Common myeloid progenitor, CD34-positive (primary cell): ENCODE measurements at regions of chr12 and their contacts with region 1.

Region 1: GRCh38 chr12:12376646-12377448 is 20.0 kb downstream of the BORCS5 start:
- DNase-seq: peak; percentile 78 to 88 (median 87)
- H3K4me3 ChIP-seq: no peak overlapping the region
- H3K27ac ChIP-seq: no peak overlapping the region
- H3K4me1 ChIP-seq: peaks cover 0 to 4% (median 2%) of the 10 kb centered on the region in 4 experiments
- H3K27me3 ChIP-seq: no peaks in the 10 kb centered on the region

Region 2: GRCh38 chr12:12282761-12283425 is 94.0 kb before region 1 on chr12:
- CTCF ChIA-PET with region 1: no interaction called
- POLR2A ChIA-PET with region 1: no interaction called
- DNase-seq: no peak
- H3K4me3 ChIP-seq: no peak overlapping the region
- H3K27ac ChIP-seq: no peak overlapping the region
- H3K4me1 ChIP-seq: no peaks in the 10 kb centered on the region
- H3K27me3 ChIP-seq: peaks cover 0 to 4% (median 0%) of the 10 kb centered on the region in 5 experiments

Region 3: GRCh38 chr12:12305568-12306300 is 71.1 kb before region 1 on chr12:
- CTCF ChIA-PET with region 1: no interaction called
- POLR2A ChIA-PET with region 1: no interaction called
- DNase-seq: no peak
- H3K4me3 ChIP-seq: no peak overlapping the region
- H3K27ac ChIP-seq: no peak overlapping the region
- H3K4me1 ChIP-seq: no peaks in the 10 kb centered on the region
- H3K27me3 ChIP-seq: no peaks in the 10 kb centered on the region

Region 4: DNA sequence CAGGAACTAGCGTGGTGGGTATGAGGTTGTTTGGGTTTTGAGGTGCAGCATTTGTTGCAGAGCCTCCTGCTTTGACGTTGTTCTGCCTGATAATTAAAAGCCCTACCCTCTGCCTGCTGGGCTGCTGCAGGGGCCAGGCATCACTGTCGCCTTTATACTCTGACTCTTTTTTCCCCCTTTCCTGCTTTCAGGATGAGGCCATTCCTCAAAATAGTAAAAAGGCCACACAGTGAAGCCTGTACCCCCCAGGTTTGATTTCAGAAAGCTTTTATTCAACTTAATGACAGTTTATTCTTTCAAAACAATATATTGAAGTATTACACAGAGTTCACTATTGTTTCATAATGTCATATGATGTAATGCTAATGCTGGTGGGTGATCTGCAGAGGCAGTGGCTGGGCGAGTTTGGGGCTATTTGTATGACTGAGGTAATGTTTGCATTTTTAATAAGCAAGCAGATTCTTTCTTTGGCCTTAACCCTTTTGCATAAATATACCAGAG is 10.9 kb before region 1 on chr12:
- CTCF ChIA-PET with region 1: interaction called, 19 read pairs
- POLR2A ChIA-PET with region 1: no interaction called
- DNase-seq: no peak
- H3K4me3 ChIP-seq: no peak overlapping the region
- H3K27ac ChIP-seq: no peak overlapping the region
- H3K4me1 ChIP-seq: no peaks in the 10 kb centered on the region
- H3K27me3 ChIP-seq: no peaks in the 10 kb centered on the region

Region 5: DNA sequence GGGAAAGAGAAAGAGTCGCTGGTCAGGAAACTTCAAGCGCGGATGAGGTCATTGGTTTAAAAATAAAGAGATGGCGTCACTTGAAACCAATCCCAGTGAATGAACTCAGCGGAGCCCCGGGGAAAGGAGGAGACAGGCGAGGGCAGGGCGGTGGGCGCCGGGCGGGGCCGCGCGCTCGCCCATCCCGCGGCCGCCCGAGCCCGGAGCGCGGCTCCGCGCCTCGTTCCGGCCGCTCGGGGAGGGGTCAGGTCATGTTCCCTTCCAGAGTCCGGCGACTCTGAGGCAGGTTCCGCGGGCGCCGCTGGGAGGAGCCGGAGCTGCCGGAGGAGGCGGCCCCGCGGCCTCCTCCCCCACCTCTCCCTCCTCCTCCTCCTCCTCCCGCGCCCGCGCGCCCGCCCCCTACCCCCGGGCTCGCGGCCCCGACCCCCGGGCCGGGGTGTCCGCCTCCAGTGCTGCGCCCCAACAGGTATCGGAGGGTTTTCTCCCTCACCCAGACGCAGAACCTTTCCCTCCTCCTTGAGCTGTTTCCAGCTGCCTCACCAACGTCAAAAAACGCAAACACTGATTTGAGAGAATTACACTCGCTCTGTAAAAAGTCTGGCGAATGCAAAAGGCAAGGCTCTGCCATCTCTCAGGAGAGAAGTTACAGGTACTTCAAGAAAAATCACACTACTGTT is 185.9 kb after region 1 on chr12 and contains the start of gene DUSP16:
- CTCF ChIA-PET with region 1: interaction called, 22 read pairs
- POLR2A ChIA-PET with region 1: no interaction called
- DNase-seq: peak; percentile 91 to 95 (median 95)
- H3K4me3 ChIP-seq: peak within 1 kb of the TSS; percentile 68 to 92 (median 79)
- H3K27ac ChIP-seq: peak within 1 kb of the TSS; percentile 72 to 86
- H3K4me1 ChIP-seq: peaks cover 6 to 17% (median 12%) of the 10 kb centered on the region in 4 experiments
- H3K27me3 ChIP-seq: no peaks in the 10 kb centered on the region

Region 6: DNA sequence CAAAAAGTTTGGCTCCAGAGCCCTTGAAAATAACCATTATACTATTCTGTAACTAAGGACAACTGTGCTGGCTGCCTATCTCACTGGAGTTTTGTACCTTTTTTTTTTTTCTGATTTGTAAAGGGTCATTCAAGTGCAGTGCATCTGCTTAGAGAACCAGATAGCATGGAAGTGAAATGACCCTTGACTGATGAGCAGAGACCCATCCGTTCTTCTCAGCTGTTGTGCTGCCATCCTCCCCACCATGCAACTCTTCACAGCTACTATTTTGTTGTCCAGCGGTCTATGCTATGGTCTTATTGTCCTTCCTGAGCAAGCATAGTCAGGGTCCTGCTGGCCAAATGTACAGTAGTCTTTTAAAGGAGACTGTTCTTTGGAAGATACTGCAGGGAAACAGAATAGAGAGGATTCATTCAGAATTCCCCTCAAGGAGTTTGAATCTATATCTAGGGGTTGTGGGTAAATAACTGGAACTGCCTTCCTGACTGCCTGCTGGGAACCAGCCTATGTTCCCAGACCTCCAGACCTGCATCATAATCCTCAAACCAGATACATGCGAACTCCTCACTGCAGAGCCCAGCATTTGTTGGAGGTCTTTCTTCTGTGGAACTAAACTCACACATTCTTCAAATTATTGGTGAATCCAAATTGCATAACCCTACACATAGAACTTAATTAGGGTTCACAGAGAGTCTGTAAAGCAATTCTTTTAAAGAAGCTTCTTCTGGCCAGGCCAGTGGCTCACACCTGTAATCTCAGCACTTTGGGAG is 278.0 kb after region 1 on chr12:
- CTCF ChIA-PET with region 1: interaction called, 17 read pairs
- POLR2A ChIA-PET with region 1: no interaction called
- DNase-seq: no peak
- H3K4me3 ChIP-seq: no peak overlapping the region
- H3K27ac ChIP-seq: no peak overlapping the region
- H3K4me1 ChIP-seq: peaks cover 0 to 3% (median 0%) of the 10 kb centered on the region in 4 experiments
- H3K27me3 ChIP-seq: no peaks in the 10 kb centered on the region

Region 7: GRCh38 chr12:12736759-12737676 is 360.2 kb after region 1 on chr12:
- CTCF ChIA-PET with region 1: interaction called, 27 read pairs
- POLR2A ChIA-PET with region 1: no interaction called
- DNase-seq: peak; percentile 69 to 85 (median 79)
- H3K4me3 ChIP-seq: peak overlapping the region in 6 of 7 experiments; percentile 15 to 56 (median 27)
- H3K27ac ChIP-seq: peak overlapping the region in 1 of 2 experiments; percentile 27
- H3K4me1 ChIP-seq: peaks cover 11 to 33% (median 27%) of the 10 kb centered on the region in 4 experiments
- H3K27me3 ChIP-seq: no peaks in the 10 kb centered on the region